ENCODE measurements at regions of chr5 and their contacts with region 1.

Region 1: GRCh38 chr5:151020304-151021110 is at the start of gene GPX3:
- DNase-seq: peak; percentile 92
- ATAC-seq: peak; percentile 97
- H3K4me3 ChIP-seq: peak within 1 kb of the TSS; percentile 72 to 90 (median 88)
- H3K27ac ChIP-seq: peak within 1 kb of the TSS; percentile 58
- H3K4me1 ChIP-seq: peaks cover 89% of the 10 kb centered on the region
- H3K27me3 ChIP-seq: no peaks in the 10 kb centered on the region; a peak in 1 of 5 replicates
- CTCF ChIP-seq: no peak
- EP300 ChIP-seq: no peak
- POLR2A ChIP-seq: peak; percentile 94 to 100
- RAD21 ChIP-seq: no peak
- total RNA-seq, gene GPX3: 31.9 and 33.8 TPM in 2 replicates

Region 2: GRCh38 chr5:151040211-151040747 is 19.8 kb after region 1 on chr5:
- CTCF ChIA-PET with region 1: no interaction called
- POLR2A ChIA-PET with region 1: interaction called, 10 read pairs
- in situ Hi-C with region 1: no loop called
- intact Hi-C with region 1: loop called (anchors 2 kb)
- DNase-seq: peak; percentile 78
- ATAC-seq: peak; percentile 95
- H3K4me3 ChIP-seq: no peak overlapping the region
- H3K27ac ChIP-seq: peak overlapping the region; percentile 63
- H3K4me1 ChIP-seq: peaks cover 39% of the 10 kb centered on the region
- H3K27me3 ChIP-seq: no peaks in the 10 kb centered on the region
- CTCF ChIP-seq: peak; percentile 61
- EP300 ChIP-seq: no peak
- POLR2A ChIP-seq: no peak
- RAD21 ChIP-seq: no peak